Aorta (tissue), 5 donors: ENCODE measurements at regions of chr4 and their contacts with region 1.

Region 1: GRCh38 chr4:158371158-158371557 is 150.5 kb upstream of the RXFP1 start:
- DNase-seq: no peak
- ATAC-seq: no peak
- H3K4me3 ChIP-seq: no peak overlapping the region
- H3K27ac ChIP-seq: no peak overlapping the region
- H3K4me1 ChIP-seq: peaks cover 0 to 1% of the 10 kb centered on the region in 2 donors
- H3K27me3 ChIP-seq: no peaks in the 10 kb centered on the region

Region 2: GRCh38 chr4:158146736-158147135 is 224.4 kb before region 1 on chr4:
- intact Hi-C with region 1: no loop called
- DNase-seq: no peak
- ATAC-seq: no peak
- H3K4me3 ChIP-seq: no peak overlapping the region
- H3K27ac ChIP-seq: no peak overlapping the region
- H3K4me1 ChIP-seq: no peaks in the 10 kb centered on the region
- H3K27me3 ChIP-seq: no peaks in the 10 kb centered on the region

Region 3: DNA sequence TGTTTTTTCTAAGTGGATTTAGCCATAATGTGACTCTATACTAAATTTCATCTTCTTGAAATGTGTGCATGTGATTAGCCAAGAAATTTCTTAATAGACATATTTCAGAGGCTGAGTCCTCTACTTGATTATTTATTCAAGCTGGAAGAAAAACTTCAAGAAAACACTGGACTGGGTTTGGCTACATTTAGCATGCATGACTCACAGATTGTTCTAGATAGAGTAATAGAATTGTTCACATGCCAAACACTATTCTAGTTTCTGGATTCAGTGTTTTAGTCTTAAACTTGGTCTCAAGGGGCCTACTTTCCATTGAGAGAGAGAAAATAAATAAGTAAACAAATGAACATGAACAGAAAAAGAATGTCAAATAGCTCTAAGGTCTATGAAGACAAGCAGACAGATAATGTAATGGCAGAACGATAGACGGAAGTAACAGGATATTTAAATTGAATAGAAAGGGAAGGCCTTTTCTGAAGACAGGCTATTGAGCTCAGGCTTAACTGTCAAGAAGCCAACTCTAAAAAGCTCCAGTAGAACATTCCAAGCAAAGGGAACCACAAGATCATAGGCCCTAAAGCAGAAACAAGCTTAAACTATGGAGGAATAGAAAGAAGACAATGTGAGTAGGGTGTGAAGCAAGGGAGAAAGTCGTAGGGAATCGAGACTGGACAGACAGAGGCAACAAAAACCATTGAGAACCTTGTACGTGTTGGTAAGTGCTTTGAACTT is 56.2 kb before region 1 on chr4:
- intact Hi-C with region 1: loop called in 1 of 2 experiments (anchors 5 kb)
- DNase-seq: no peak
- ATAC-seq: peak; percentile 90
- H3K4me3 ChIP-seq: no peak overlapping the region
- H3K27ac ChIP-seq: peak overlapping the region; percentile 96
- H3K4me1 ChIP-seq: no peaks in the 10 kb centered on the region
- H3K27me3 ChIP-seq: no peaks in the 10 kb centered on the region